Endothelial cell of umbilical vein (primary cell): ENCODE measurements at regions of chr7 and their contacts with region 1.

Region 1: DNA sequence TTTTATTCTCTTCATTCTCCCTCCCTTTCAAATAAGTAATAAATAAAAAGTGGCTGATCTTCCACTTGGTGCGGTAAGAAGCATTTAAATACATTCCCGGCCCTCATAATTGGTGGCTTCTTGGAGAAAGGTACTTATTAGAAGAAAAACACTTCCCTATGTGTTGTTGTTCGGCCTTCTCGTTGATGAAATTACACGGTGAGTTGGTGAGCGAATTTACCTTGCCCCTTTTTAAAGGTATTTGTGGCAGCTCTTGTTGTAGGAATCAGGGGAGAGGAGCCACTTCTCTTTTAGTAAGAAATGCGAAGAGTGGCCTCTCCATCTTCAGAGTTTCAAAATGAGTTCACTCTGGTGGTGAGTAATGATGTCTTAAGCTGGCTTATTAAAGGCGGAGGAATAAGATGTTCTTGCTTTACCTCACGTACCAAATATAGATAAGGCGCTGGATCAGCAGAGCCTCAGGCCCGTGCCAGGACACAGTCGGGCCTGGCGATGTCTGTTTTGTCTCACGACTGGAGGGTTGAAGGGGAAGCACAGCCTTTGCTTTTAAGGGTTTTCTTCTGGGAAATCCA is 135.9 kb downstream of the CUX1 start:
- DNase-seq: no peak
- H3K4me3 ChIP-seq: peak overlapping the region in 1 of 3 experiments; percentile 43
- H3K27ac ChIP-seq: peak overlapping the region; percentile 88
- H3K4me1 ChIP-seq: peaks cover 28% of the 10 kb centered on the region
- H3K27me3 ChIP-seq: no peaks in the 10 kb centered on the region
- CTCF ChIP-seq: no peak
- POLR2A ChIP-seq: no peak

Region 2: DNA sequence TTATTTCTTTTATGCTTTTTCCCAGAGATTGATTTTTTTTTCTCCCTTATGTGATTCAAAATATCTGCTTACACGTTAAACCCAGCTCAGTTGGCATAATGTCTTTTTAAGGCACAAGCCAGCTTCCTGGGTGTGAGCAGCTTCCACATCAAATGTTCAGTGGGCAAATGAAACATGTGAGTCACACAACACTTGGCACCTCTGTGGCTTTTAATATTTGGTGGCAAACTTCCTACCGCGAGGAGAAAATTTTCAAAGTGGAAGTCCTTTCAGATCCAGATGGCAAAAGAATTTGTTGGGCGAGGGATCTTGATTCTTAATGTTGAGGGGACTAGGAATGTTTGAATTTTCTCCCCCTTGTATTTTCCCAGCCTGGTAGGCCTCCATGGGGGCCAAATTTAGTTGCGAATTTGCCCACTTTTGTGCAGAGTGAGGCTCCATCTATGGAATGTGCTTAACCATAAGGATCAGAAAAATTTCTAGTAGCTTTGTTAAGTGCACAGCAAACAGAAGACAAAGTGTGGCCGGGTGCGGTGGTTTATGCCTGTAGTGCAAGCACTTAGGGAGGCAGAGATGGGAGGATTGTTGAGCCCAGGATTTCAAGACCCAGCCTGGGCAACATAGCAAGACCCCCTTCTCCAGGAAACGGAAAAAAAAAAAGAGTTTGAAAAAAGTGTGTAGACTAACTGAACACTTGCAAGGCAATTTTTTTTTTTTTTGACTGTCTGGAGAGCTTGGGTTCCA is 105.0 kb before region 1 on chr7:
- CTCF ChIA-PET with region 1: no interaction called
- POLR2A ChIA-PET with region 1: no interaction called
- dilution Hi-C with region 1: no loop called
- intact Hi-C with region 1: no loop called
- DNase-seq: no peak
- H3K4me3 ChIP-seq: no peak overlapping the region
- H3K27ac ChIP-seq: no peak overlapping the region
- H3K4me1 ChIP-seq: no peaks in the 10 kb centered on the region
- H3K27me3 ChIP-seq: no peaks in the 10 kb centered on the region
- CTCF ChIP-seq: no peak
- POLR2A ChIP-seq: no peak

Region 3: GRCh38 chr7:101882595-101883564 is 70.5 kb before region 1 on chr7:
- CTCF ChIA-PET with region 1: interaction called, 3 read pairs
- POLR2A ChIA-PET with region 1: interaction called, 8 read pairs
- dilution Hi-C with region 1: no loop called
- intact Hi-C with region 1: loop called (anchors 1 kb)
- DNase-seq: peak; percentile 98
- H3K4me3 ChIP-seq: peak overlapping the region in 1 of 3 experiments; percentile 1
- H3K27ac ChIP-seq: peak overlapping the region; percentile 93
- H3K4me1 ChIP-seq: peaks cover 35% of the 10 kb centered on the region
- H3K27me3 ChIP-seq: no peaks in the 10 kb centered on the region
- CTCF ChIP-seq: no peak
- POLR2A ChIP-seq: no peak